Common myeloid progenitor, CD34-positive (primary cell): ENCODE measurements at regions of chr7 and their contacts with region 1.

Region 1: DNA sequence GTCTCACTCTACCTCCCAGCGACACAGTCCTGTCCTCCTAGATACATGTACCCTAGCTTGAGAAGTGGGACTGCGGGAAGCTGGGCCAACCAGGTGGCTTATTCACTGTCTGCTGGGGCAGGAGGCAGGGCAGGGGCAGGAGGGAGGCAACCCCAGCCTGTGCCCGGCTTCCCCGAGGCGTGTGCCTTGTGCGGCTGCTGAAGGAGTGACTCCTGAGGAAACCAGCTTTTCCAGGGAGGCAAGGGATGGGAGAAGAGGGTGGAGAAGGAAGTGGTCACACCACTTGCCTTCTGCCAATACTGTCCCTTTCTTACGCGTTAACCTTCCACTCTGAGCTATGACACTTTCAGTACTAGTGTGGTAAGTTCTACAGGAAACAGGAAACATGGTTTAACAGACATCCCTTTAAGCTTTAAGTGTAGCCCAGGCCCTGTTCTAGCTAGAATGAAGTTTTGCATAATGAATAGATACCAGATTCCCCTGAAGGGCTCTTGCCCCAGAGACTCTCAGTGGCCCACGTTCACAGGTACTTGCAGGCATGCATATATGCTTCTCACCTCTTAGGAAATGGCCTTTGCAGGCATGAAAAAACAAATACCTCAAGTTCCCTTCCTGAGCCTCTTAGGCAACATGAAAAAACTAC is 40.6 kb downstream of the SYPL1 start:
- DNase-seq: peak; percentile 85 to 97 (median 93)
- H3K4me3 ChIP-seq: peak overlapping the region in 5 of 7 experiments; percentile 27 to 65 (median 58)
- H3K27ac ChIP-seq: peak overlapping the region; percentile 89 to 93
- H3K4me1 ChIP-seq: peaks cover 32 to 86% (median 74%) of the 10 kb centered on the region in 4 experiments
- H3K27me3 ChIP-seq: no peaks in the 10 kb centered on the region

Region 2: GRCh38 chr7:106056513-106057203 is 14.8 kb before region 1 on chr7:
- CTCF ChIA-PET with region 1: interaction called, 56 read pairs
- POLR2A ChIA-PET with region 1: no interaction called
- DNase-seq: peak; percentile 72 to 85 (median 83)
- H3K4me3 ChIP-seq: no peak overlapping the region
- H3K27ac ChIP-seq: no peak overlapping the region
- H3K4me1 ChIP-seq: peaks cover 7 to 42% (median 27%) of the 10 kb centered on the region in 4 experiments
- H3K27me3 ChIP-seq: no peaks in the 10 kb centered on the region

Region 3: GRCh38 chr7:106101726-106102125 is 30.2 kb after region 1 on chr7:
- CTCF ChIA-PET with region 1: interaction called, 12 read pairs
- POLR2A ChIA-PET with region 1: no interaction called
- DNase-seq: no peak
- H3K4me3 ChIP-seq: no peak overlapping the region
- H3K27ac ChIP-seq: peak overlapping the region in 1 of 2 experiments; percentile 37
- H3K4me1 ChIP-seq: peaks cover 7 to 50% (median 17%) of the 10 kb centered on the region in 4 experiments
- H3K27me3 ChIP-seq: no peaks in the 10 kb centered on the region

Region 4: DNA sequence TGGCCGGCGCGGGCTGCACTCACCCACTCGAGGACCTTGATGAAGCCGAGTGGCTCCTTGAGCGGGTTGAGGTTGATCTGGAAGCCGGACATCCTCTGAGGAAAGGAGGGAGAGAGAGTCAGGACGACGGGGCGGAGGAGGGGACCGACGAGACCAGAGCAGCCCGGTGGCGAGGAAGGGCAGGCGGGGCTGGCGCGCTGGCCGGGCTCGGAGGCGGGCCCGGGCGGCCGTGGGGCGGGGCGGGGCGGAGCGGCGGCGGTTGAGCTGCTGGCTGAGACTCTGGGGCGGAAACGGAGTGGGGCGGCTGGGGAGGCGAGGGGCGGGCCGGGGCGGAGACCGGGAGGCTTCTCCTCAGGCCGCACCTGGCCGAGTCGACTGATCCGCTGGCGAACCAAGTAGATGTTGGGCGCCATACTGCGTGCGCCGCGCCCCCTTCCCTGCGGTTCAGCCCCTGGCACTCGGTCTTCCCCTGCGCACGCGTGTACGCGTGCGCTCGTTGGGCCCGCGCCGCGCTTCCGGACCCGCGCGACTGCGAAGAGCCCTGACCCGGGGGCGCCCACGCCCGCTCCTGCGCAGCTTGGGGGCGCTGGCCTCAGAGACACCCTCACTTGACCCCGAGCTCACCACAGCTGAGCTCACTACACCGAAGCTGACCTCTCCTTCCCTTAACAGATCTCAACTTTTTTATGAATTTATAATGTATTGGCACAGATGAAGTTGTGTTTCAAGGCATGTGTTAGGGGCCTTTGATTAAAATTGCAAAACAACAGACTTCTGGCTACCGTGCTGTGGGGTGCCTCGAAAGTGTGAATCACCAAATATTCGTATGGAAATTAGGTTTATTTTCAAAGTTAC is 40.9 kb after region 1 on chr7 and contains the start of gene SYPL1:
- CTCF ChIA-PET with region 1: interaction called, 36 read pairs
- POLR2A ChIA-PET with region 1: interaction called, 31 read pairs
- DNase-seq: peak; percentile 96 to 98 (median 97)
- H3K4me3 ChIP-seq: peak within 1 kb of the TSS; percentile 83 to 97 (median 91)
- H3K27ac ChIP-seq: peak within 1 kb of the TSS; percentile 91 to 95
- H3K4me1 ChIP-seq: peaks cover 42 to 69% (median 60%) of the 10 kb centered on the region in 4 experiments
- H3K27me3 ChIP-seq: no peaks in the 10 kb centered on the region